HepG2 (cell line): ENCODE measurements at regions of chr12 and their contacts with region 1.

Region 1: DNA sequence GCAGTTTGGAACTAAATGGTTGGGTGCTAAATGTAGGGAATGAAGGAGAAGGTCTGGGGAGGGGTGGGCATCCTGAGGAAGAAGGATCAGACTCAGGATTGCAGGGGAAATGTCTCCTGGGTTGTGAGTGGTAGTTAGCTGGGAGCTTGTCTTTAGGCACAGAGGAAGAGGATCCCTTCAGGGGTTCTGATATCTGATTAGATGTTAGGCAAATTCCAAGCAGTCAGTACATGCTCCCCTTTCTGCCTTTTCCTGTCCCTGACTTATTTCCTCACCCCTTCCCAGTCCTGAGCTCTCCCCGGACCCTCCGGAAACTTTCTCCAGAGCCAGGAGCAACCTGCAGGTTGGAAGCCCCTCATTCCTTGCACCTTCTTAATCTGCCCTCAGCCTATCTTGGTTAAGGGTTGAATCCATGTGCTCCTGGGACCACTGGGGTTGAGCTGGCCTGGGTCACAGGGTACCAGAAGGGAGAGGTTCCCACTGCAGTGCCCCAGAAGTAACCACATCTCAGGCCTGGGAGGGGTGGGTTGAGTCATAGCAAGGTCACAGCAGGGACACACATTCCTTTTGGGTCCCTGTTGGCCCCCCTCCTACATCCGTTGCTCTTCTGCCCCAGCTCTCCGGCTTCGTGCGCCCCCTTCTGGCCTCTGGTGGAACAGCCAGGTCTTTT is 1.6 kb downstream of the IGFBP6 start:
- DNase-seq: peak; percentile 91
- ATAC-seq: peak; percentile 24
- H3K4me3 ChIP-seq: peak overlapping the region; percentile 56 to 90 (median 78); a peak in 5 of 6 replicates
- H3K27ac ChIP-seq: no peak overlapping the region
- H3K4me1 ChIP-seq: peaks cover 91% of the 10 kb centered on the region
- H3K27me3 ChIP-seq: peaks cover 0 to 6% of the 10 kb centered on the region in 2 experiments; a peak in 2 of 5 replicates
- CTCF ChIP-seq: peak; percentile 89
- EP300 ChIP-seq: peak in 1 of 2 experiments; percentile 51; a peak in 1 of 4 replicates
- POLR2A ChIP-seq: no peak
- RAD21 ChIP-seq: peak; percentile 89

Region 2: DNA sequence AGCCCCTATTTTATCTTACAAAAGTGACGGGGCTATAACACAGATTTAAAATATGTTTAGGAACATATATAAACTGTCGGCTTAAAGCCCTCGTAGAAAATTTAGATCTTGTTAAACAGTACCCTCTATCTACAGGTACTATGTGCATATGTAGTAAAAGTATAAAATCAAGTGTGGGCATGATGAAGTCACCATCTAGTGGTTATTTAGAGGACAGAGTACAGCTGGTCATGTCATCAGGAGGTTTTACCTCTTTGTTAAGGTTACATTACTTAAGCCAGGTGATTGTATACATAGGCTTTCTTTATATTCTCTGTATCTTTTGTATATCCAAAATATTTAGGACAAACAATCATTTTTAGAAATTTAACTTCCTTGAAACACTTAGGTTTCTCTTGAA is 67.5 kb before region 1 on chr12:
- CTCF ChIA-PET with region 1: no interaction called
- POLR2A ChIA-PET with region 1: no interaction called
- in situ Hi-C with region 1: no loop called
- intact Hi-C with region 1: no loop called
- DNase-seq: no peak
- ATAC-seq: peak; percentile 60
- H3K4me3 ChIP-seq: no peak overlapping the region
- H3K27ac ChIP-seq: no peak overlapping the region
- H3K4me1 ChIP-seq: no peaks in the 10 kb centered on the region
- H3K27me3 ChIP-seq: no peaks in the 10 kb centered on the region
- CTCF ChIP-seq: 0 out of 2 replicates have a peak, but pooled peaks have one; percentile 14
- EP300 ChIP-seq: no peak
- POLR2A ChIP-seq: no peak
- RAD21 ChIP-seq: no peak

Region 3: GRCh38 chr12:53047221-53048042 is 51.7 kb before region 1 on chr12:
- CTCF ChIA-PET with region 1: no interaction called
- POLR2A ChIA-PET with region 1: interaction called, 65 read pairs
- in situ Hi-C with region 1: no loop called
- intact Hi-C with region 1: no loop called
- DNase-seq: peak; percentile 44
- ATAC-seq: peak; percentile 2
- H3K4me3 ChIP-seq: peak overlapping the region; percentile 77 to 91 (median 83)
- H3K27ac ChIP-seq: peak overlapping the region; percentile 89
- H3K4me1 ChIP-seq: peaks cover 79% of the 10 kb centered on the region
- H3K27me3 ChIP-seq: no peaks in the 10 kb centered on the region; a peak in 1 of 5 replicates
- CTCF ChIP-seq: peak; percentile 3; the same call in 1 of the 2 replicates
- EP300 ChIP-seq: no peak
- POLR2A ChIP-seq: 0 out of 4 replicates have a peak, but pooled peaks of 1 of the 2 experiments have one; percentile 3
- RAD21 ChIP-seq: 0 out of 2 replicates have a peak, but pooled peaks have one; percentile 18

Region 4: DNA sequence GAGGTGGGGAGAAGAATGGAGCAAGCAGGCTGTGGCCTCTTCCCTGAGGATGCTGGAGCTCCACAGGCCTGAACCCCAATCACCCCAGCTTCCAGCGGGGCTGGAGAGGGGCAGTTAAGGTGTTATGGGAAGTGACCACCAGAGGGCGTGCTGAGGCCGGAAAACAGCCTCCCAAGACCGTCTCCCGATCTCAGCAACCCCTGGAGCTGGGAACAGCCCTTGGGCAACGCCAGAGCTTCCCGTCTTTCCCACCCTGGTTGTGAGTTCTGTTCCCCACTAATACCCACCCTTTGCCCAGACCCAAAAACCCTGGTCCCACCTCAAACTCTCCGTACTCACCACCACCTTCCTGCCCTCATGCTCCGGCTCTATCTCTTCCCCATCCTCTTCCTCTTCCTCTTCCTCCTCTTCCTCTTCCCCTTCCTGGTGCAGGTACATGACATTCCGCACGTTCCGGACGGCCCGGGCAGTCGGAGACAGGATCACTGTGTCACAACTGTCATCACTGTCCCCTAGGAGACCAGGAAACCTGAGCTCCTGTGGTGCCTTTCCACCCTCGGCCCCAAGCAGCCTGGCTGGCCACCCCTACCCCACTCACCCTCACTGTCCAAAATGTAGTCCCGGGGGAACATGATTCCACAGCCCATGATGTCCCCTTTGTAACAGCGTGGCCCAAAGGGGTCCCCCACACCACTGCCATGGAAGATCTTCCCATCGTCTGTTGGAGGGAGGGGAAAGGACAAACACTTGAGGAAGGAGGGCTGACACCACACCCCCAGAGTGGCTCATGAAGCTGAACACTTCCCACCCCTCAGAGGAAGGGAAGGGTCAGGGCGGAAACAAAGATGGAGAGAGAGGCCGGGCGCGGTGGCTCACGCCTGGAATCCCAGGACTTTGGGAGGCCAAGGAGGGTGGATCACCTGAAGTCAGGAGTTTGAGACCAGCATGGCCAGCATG is 32.9 kb before region 1 on chr12:
- CTCF ChIA-PET with region 1: interaction called, 36 read pairs
- POLR2A ChIA-PET with region 1: interaction called, 47 read pairs
- in situ Hi-C with region 1: loop called (anchors 5 kb)
- intact Hi-C with region 1: loop called (anchors 1 kb)
- DNase-seq: peak; percentile 57
- ATAC-seq: peak; percentile 66
- H3K4me3 ChIP-seq: no peak overlapping the region
- H3K27ac ChIP-seq: no peak overlapping the region
- H3K4me1 ChIP-seq: peaks cover 25% of the 10 kb centered on the region
- H3K27me3 ChIP-seq: no peaks in the 10 kb centered on the region
- CTCF ChIP-seq: peak; percentile 95
- EP300 ChIP-seq: no peak
- POLR2A ChIP-seq: no peak
- RAD21 ChIP-seq: peak; percentile 95

Region 5: GRCh38 chr12:53122961-53123468 is 23.9 kb after region 1 on chr12:
- CTCF ChIA-PET with region 1: no interaction called
- POLR2A ChIA-PET with region 1: no interaction called
- in situ Hi-C with region 1: no loop called
- intact Hi-C with region 1: no loop called
- DNase-seq: no peak
- ATAC-seq: peak; percentile 25; the same call in 1 of the 3 replicates
- H3K4me3 ChIP-seq: no peak overlapping the region
- H3K27ac ChIP-seq: no peak overlapping the region
- H3K4me1 ChIP-seq: peaks cover 6% of the 10 kb centered on the region; the same call in 1 of the 2 replicates
- H3K27me3 ChIP-seq: no peaks in the 10 kb centered on the region
- CTCF ChIP-seq: no peak
- EP300 ChIP-seq: no peak
- POLR2A ChIP-seq: no peak
- RAD21 ChIP-seq: no peak

Region 6: DNA sequence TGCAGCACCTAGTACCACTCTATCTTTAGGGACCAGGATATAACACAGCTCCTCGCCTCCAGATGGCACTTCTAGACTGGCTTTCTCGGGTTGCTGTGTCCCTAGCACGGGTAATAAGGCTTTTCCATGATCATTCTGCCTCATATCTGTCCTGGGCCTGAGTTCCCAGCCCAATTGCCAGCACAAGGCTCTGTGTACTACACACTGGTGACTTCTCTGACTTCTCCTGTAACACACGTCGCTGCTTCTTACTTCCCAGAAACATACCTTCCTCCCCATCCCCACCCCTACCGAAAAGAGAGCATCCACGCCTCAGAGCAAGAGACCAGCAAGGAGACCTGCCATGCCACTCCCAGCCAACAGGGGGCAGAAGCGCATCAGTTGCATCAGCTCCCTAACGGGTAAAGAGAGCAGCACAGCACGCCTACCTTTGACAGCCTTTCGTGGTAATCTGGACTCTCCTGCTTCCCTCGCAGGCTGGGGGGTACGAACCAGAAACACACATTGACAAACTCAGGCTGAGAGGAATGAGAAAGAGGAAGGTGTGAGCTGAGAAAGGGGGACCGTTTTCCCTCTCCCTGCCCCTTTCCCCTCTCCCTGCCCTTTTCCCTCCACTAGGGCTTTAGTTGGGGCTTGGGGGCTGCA is 60.2 kb after region 1 on chr12:
- CTCF ChIA-PET with region 1: no interaction called
- POLR2A ChIA-PET with region 1: interaction called, 17 read pairs
- in situ Hi-C with region 1: no loop called
- intact Hi-C with region 1: no loop called
- DNase-seq: peak; percentile 77
- ATAC-seq: peak; percentile 88
- H3K4me3 ChIP-seq: peak overlapping the region in 1 of 3 experiments; percentile 36; a peak in 1 of 6 replicates
- H3K27ac ChIP-seq: no peak overlapping the region
- H3K4me1 ChIP-seq: peaks cover 44% of the 10 kb centered on the region
- H3K27me3 ChIP-seq: no peaks in the 10 kb centered on the region
- CTCF ChIP-seq: peak; percentile 99
- EP300 ChIP-seq: no peak
- POLR2A ChIP-seq: no peak
- RAD21 ChIP-seq: peak; percentile 89

Region 7: DNA sequence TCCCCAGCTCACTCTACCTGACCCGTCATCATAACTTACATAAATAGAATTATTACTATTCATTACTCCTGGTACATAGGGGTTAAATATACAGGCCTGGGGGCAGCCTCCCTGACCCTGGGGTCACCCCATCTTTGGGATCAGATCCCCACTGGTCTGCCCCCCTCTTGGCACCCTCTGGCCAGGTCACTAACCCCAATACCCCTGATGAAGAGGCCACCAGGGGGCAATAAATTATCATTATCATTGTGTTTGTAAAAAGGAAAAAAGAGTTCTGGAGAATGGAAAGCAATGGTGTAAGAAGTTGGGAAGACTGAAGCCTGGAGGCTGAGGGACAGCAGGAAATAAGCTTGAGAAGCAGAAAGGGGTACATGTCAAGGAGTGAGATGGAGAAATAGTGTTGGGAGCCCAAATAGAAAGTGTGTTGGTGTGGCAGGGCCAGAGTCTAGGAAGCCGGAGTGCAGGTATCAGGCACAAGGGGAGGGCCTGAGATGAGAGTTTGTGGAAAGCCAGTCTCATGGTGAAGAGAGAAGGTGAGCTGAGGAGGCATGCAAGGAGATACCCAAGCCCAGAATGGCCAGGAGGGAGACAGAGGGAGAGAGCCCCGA is 228.4 kb after region 1 on chr12:
- CTCF ChIA-PET with region 1: no interaction called
- POLR2A ChIA-PET with region 1: no interaction called
- in situ Hi-C with region 1: no loop called
- intact Hi-C with region 1: no loop called
- DNase-seq: no peak
- ATAC-seq: peak; percentile 11
- H3K4me3 ChIP-seq: peak overlapping the region in 1 of 3 experiments; percentile 45; a peak in 1 of 6 replicates
- H3K27ac ChIP-seq: no peak overlapping the region
- H3K4me1 ChIP-seq: peaks cover 36% of the 10 kb centered on the region
- H3K27me3 ChIP-seq: peaks cover 4 to 23% of the 10 kb centered on the region in 2 experiments; a peak in 4 of 5 replicates
- CTCF ChIP-seq: peak; percentile 25; the same call in 1 of the 2 replicates
- EP300 ChIP-seq: no peak
- POLR2A ChIP-seq: no peak
- RAD21 ChIP-seq: no peak

Region 8: DNA sequence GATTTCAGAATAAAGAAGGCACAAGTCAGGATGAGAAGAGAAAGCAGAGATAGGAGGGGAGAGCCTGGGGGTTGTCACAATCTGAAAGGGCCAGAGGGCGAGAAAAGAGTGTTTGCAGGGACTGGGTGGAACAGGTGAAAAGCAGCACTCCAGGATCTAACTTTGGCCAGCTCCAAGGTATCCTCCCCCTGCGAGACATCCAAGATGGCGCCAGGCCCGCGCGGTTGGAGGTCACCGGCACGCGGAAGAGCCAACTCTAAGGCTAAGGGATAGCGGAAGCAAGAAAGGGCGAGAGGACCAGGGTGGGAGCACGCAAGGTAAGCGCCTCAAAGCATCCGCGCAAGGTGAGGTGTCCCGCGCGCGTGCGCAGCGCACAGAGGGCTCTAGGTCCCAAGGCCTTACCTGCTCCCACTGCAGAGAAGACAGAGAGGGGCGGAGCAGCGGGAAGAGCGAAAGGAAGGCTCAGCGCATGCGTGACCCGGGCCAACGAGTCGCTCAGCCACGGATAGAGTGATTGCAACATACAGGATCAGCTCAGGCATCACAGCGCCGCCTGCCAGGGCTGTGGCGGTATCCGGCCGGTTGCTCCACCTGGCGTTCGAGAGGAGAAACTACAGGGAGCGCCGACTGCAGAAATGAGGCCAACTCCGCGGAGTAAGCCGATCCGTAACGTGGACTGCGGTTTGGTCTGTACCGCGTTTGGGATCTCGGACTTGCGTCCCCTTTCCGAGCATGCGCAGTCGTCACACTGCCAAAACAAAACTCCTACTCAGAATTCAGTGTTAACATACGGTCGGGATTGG is 576.7 kb after region 1 on chr12 and contains the start of gene ATP5MC2:
- CTCF ChIA-PET with region 1: no interaction called
- POLR2A ChIA-PET with region 1: no interaction called
- in situ Hi-C with region 1: no loop called
- intact Hi-C with region 1: no loop called
- DNase-seq: peak; percentile 96
- ATAC-seq: peak; percentile 96
- H3K4me3 ChIP-seq: peak within 1 kb of the TSS; percentile 60 to 79 (median 64)
- H3K27ac ChIP-seq: peak within 1 kb of the TSS; percentile 88
- H3K4me1 ChIP-seq: peaks cover 25% of the 10 kb centered on the region
- H3K27me3 ChIP-seq: peaks cover 0 to 12% of the 10 kb centered on the region in 2 experiments; a peak in 1 of 5 replicates
- CTCF ChIP-seq: peak; percentile 100
- EP300 ChIP-seq: 0 out of 4 replicates have a peak, but pooled peaks of 1 of the 2 experiments have one; percentile 74
- POLR2A ChIP-seq: peak; percentile 90 to 91
- RAD21 ChIP-seq: peak; percentile 100
- total RNA-seq, gene ATP5MC2: 230 and 280 TPM in 2 replicates